ENCODE measurements at regions of chr10 and their contacts with region 1.

Region 1: DNA sequence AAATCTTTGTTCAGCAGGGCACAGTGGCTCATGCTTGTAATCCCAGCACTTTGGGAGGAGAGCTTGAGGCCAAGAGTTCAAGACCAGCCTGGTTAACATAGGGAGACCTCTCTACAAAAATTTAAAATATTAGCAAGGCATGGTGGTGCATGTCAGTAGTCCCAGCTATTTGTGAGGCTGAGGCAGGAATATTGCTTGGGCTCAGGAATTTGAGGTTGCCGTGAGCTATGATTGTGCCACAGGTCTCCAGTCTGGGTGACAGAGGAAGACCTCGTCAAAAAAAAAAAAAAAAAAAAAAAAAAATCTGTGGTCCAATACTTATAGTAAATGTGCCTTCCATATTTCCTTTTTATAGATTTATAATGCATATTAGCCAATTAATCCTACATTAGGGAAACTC is 16.7 kb downstream of the THNSL1 start:
- DNase-seq: no peak
- ATAC-seq: no peak

Region 2: GRCh38 chr10:24790599-24790998 is 242.5 kb before region 1 on chr10:
- intact Hi-C with region 1: no loop called
- DNase-seq: no peak
- ATAC-seq: peak in 1 of 2 donors; percentile 5

Region 3: GRCh38 chr10:24882047-24882698 is 151.0 kb before region 1 on chr10:
- intact Hi-C with region 1: no loop called
- DNase-seq: no peak
- ATAC-seq: peak; percentile 37 to 47

Region 4: DNA sequence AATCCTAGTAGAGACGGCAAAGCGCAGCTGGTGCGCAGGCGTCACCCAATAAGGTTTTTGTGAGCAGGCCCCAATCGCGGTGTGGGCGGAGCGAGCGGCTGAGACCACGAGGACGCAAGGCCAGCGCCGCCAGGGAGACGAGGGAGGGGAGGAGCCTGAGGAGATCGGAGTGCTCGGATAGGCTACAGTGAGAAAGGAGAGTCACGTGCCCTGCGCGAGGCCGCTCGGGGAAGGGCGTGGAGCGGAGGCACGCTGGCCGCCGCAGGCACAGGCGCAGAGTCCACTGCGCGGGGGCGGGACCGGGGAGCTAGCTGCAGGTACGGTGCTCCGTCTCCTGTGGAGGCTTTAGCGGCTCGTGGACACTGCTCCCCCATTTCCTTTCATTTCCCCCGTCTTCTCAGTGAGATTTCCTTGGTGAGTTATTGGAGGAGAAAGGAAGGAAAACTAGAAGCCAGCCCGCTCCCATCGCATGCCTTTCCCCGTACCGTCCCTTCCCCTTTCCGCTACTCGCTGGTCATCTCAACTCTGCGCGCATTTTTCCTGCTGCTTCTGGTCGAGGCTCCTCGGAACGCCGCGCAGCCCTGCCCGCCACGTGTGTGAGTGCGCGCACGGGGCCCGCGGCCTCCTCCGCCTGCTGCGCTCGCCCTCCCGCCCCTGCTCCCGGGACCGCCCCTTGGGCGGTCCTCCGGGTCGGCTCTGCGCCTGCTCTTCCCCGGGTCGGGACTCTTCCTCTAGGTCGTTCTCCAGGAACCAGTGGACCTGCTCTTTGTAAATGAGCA is 16.6 kb before region 1 on chr10 and contains the start of gene THNSL1:
- intact Hi-C with region 1: no loop called
- DNase-seq: peak; percentile 99
- ATAC-seq: peak; percentile 99 to 100
- total RNA-seq, gene THNSL1: 2.6 to 4.4 TPM

Region 5: GRCh38 chr10:25072786-25073185 is 39.7 kb after region 1 on chr10:
- intact Hi-C with region 1: loop called in 1 of 2 experiments (anchors 5 kb)
- DNase-seq: no peak
- ATAC-seq: no peak

Region 6: DNA sequence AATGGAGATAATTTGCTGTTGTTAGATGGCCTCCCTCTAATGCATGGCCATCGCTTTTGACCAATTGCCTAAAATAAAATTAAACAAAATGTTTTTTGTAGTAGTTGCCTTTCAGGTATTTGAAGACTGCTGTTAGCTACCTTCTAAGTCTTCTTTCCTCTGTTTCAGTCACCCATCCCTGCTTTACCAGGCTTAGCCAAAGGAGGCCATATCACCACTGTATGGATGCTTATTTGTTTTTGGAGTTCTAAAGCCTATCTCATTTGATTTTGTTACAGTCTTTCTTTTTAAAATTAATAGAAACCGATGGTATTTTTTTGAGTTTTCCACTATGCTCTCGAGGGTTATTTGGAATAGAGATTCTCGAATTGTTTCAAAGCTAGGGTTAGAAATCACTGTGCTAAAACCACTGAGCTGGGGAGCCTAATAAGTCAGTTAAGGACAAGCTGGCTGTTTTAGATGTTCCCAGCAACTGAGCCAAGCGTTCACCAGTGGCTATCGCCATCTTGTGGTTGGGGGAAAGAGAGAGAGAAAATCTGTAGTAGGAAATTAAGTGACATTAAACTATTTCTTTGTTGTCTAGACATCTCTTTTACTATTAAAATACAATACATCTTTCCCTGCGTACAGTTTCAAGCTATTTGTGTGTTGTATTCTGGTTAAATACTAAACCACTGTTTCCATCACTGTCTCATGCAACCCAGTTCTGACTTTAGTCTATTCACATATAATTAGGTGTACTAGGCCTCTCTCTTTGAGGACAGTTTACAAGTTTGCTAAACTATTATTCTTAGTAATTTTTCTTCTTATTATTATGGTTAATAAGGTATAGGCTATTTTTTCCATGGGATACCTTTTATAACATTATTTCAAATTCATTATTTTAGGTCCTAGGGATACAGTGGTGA is 193.9 kb after region 1 on chr10:
- intact Hi-C with region 1: loop called in 1 of 2 experiments (anchors 5 kb)
- DNase-seq: no peak
- ATAC-seq: peak in 1 of 2 donors; percentile 35